Activated T-helper 2 cell treated with anti-CD3 and anti-CD28 coated beads, Interferon-gamma antibody, Interleukin-2, Interleukin-4, amounts not matched to agents 10 μg/mL and 5 μg/mL and 100 μg/mL, durations not matched to agents 14 hours and 24 hours and 36 hours (primary cell): ENCODE measurements at regions of chr12 and their contacts with region 1.

Region 1: GRCh38 chr12:57846577-57847319 is at the start of gene CTDSP2:
- DNase-seq: peak; percentile 84
- H3K4me3 Mint-ChIP-seq: peak within 1 kb of the TSS; percentile 77
- H3K27ac Mint-ChIP-seq: peak within 1 kb of the TSS; percentile 28
- H3K4me1 Mint-ChIP-seq: peaks cover 28% of the 10 kb centered on the region
- H3K27me3 Mint-ChIP-seq: peaks cover 30% of the 10 kb centered on the region
- total RNA-seq, gene CTDSP2: 62.5 and 65.2 TPM in 2 replicates

Region 2: GRCh38 chr12:57782608-57783465 is 63.9 kb before region 1 on chr12 and contains the start of gene TSFM:
- intact Hi-C with region 1: loop called (anchors 5 kb)
- DNase-seq: peak; percentile 94
- H3K4me3 Mint-ChIP-seq: peak within 1 kb of the TSS; percentile 98
- H3K27ac Mint-ChIP-seq: peak within 1 kb of the TSS; percentile 95
- H3K4me1 Mint-ChIP-seq: peaks cover 21% of the 10 kb centered on the region
- H3K27me3 Mint-ChIP-seq: no peaks in the 10 kb centered on the region
- total RNA-seq, gene TSFM: 44.9 and 52.7 TPM in 2 replicates

Region 3: DNA sequence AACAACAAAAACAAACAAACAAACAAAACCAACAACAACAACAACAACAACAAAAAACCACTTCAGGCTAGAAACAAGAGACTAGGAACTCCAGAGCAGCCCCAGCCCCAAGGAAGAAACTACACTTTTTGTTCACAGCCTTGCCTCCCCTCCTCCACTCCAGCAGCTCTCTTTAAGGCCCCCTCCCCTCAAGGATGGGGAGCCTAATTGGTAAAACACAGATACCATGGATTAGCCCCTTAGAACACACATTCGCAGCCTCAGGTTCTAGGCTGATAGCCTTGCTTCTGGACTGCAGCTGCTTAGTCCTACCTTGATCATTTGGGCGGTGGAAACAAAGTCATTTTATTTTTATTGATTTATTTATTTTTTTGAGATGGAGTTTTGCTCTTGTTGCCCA is 16.4 kb before region 1 on chr12:
- intact Hi-C with region 1: loop called (anchors 2 kb)
- DNase-seq: no peak
- H3K4me3 Mint-ChIP-seq: no peak overlapping the region
- H3K27ac Mint-ChIP-seq: no peak overlapping the region
- H3K4me1 Mint-ChIP-seq: peaks cover 21% of the 10 kb centered on the region
- H3K27me3 Mint-ChIP-seq: no peaks in the 10 kb centered on the region

Region 4: DNA sequence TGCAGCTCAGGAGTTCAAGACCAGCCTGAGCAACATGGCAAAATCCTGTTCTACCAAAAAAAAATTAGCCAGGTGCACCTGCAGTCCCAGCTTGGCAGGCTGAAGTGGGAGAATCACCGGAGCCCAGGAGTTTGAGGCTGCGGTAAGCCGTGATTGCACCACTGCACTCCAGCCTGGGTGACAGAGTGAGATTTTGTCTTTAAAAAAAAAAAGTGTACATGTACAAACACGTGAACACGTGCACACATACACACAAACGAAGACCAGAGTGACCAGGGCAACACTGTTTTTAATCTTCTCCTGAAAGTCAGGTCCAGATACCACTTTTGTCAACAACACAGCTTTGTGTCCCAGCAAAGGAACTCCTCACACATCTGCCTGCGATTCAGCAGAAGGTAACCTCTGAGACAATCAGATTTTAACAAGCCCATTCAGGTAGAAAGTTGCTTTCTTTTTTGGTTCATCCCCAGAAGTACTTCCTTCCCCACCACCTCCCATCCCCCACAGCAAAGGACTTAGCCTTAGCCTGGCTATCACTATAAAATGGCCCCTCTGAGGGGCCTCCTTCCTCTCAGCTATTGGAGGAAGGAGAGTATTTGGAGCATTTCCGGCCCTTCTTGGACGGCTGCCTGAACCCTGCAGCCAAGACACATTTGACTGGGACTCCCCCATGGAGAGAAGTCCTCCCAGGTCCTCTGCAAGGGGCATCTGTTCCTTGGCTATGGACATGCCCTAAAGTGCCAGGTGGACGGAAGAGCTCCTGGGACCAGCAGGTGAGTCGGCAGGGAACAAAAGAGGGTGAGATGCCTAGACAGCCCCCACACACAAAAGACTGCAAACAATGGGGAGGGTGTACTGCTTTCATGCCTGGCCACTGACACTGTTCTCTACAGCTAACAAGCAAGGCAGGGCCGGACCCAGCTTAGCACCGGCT is 10.0 kb before region 1 on chr12:
- intact Hi-C with region 1: loop called (anchors 1 kb)
- DNase-seq: peak; percentile 32
- H3K4me3 Mint-ChIP-seq: peak overlapping the region; percentile 26
- H3K27ac Mint-ChIP-seq: peak overlapping the region; percentile 77
- H3K4me1 Mint-ChIP-seq: peaks cover 67% of the 10 kb centered on the region
- H3K27me3 Mint-ChIP-seq: no peaks in the 10 kb centered on the region

Region 5: DNA sequence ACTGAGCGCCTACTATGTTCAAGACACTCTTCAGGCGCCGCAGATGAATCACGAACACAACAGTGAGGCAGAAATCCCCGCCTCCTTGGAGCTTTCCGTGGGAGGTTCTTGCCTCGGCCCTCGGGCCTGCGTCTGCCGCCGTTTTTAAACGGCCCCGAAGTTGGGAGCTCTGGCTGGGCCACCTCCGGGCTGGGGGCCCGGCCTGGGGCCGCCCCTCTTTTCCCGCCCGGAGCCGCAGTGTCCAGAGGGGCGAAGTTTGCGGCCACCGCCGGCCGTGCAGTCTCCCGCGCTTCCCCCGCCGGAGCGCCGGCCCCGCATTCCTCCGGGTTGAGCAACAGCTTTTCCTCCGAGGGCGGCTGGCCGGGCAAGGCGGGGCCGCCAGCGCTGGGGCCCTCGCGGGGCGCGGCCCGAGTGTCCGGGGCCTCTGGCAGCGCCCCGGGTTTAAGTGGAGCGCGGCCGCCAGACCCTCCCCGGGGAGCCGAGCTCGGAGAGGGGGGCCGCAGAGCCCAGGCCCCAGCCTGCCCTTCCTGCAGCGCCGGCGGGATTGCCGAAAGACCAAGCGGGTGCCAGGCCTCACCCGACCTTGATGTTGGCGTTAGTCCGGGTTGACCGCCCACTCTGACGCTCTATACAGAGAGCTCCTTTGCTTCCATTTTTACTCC is 18.5 kb after region 1 on chr12:
- intact Hi-C with region 1: loop called (anchors 2 kb)
- DNase-seq: no peak
- H3K4me3 Mint-ChIP-seq: peak overlapping the region; percentile 76
- H3K27ac Mint-ChIP-seq: peak overlapping the region; percentile 65
- H3K4me1 Mint-ChIP-seq: peaks cover 8% of the 10 kb centered on the region
- H3K27me3 Mint-ChIP-seq: peaks cover 13% of the 10 kb centered on the region

Region 6: GRCh38 chr12:57899010-57899662 is 52.4 kb after region 1 on chr12:
- intact Hi-C with region 1: loop called (anchors 1 kb)
- DNase-seq: peak; percentile 68
- H3K4me3 Mint-ChIP-seq: peak overlapping the region; percentile 61
- H3K27ac Mint-ChIP-seq: peak overlapping the region; percentile 98
- H3K4me1 Mint-ChIP-seq: peaks cover 45% of the 10 kb centered on the region
- H3K27me3 Mint-ChIP-seq: no peaks in the 10 kb centered on the region

Region 7: DNA sequence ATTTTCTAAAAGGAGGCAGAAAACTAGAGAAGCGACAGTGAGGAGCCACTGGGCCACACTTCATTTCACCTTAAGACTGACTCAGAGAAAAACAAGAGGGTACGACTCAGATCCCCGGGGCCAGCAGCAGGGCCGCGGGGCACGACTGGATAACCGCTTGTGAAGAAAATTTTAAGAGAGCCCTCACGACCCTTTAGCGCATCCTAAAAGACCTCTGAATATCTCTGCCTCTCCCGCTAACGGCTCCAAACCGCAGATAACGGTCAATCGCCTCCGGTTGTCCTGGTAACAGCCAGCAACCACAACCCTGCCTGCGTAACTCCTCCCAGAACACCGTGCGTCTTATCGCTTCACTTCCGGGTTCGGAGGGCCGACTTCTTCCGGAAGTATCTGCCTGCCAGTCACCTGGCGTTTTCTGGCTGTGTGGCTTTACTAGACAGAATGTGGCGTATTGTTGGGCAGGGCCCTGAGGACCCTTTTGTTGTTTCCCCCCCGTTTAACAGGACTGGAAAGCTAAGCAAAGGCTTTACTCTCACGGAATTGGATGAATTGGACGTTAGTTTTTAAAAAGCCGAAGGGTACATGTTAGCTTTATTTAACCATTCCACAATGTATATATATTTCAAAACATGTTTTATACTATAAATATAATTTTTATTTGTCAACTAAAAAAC is 89.2 kb after region 1 on chr12:
- intact Hi-C with region 1: loop called (anchors 2 kb)
- DNase-seq: peak; percentile 94
- H3K4me3 Mint-ChIP-seq: peak overlapping the region; percentile 88
- H3K27ac Mint-ChIP-seq: peak overlapping the region; percentile 96
- H3K4me1 Mint-ChIP-seq: peaks cover 32% of the 10 kb centered on the region
- H3K27me3 Mint-ChIP-seq: no peaks in the 10 kb centered on the region